ENCODE measurements at regions of chr20 and their contacts with region 1.

Region 1: DNA sequence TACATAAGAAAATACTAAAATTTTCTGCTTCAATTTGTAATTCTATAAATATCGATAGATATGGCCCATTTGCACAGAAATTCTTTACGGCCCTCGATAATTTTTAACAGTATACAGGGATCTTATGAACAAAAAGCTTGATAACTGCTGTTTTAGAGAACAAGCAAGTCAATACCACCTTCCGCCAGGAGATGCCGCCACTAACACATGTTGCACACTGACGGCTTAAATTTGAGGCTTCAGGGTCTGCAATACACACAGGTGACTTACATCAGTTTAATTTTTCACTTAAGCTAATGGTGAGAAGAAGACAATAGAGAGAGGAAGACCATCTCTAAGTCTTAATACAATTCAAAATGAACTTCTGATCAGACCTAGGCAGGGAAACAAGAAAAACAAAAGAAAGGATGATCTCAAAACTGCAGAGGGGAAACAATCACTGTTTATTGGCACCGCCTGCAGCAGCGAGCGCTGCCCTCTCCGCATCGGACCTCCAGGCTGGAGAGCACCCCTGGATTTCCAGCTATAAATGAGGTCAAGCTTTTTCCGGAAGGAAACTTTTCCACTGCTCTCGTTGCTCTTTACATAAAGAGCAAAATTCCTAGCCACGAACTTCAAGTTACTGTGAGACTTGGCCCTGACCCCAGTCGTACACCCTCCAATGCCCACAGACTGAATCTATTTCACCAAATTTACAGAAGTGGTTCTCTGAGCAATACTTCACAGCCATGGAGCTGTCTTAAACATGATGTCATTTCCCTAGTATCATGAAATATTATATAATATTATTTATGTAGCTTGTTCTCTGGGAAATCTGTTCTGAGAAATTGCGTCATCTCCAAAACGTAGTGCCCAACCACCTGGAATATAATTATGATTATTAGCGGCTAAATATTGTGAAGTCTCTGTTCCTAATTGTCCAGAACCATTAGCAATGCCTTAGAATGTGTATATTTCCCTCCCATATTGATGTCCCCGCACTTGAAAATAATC is 54.1 kb downstream of the OTOR start:
- DNase-seq: peak; percentile 15
- H3K4me3 Mint-ChIP-seq: no peak overlapping the region
- H3K27ac Mint-ChIP-seq: no peak overlapping the region
- H3K4me1 Mint-ChIP-seq: no peaks in the 10 kb centered on the region
- H3K27me3 Mint-ChIP-seq: peaks cover 6% of the 10 kb centered on the region

Region 2: DNA sequence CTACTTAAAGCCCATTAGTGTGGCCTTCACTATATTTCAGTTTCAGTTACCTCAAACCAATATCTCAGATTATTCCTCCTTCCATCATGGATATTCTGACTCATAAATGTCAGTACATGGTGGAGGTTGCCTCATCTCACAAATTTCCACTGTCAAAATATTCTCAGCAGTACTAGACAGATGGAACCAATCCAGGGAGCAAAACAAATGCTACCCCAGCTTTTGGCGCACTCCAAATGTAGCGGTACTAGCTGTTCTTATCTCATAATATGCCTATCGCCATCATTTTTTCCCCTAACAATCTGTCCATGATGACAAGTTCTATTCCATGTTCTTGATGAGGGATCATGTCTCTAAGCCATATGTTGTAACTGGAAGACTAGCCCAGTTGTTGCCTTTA is 1255.1 kb before region 1 on chr20:
- intact Hi-C with region 1: no loop called
- DNase-seq: no peak
- H3K4me3 Mint-ChIP-seq: no peak overlapping the region
- H3K27ac Mint-ChIP-seq: no peak overlapping the region
- H3K4me1 Mint-ChIP-seq: no peaks in the 10 kb centered on the region
- H3K27me3 Mint-ChIP-seq: no peaks in the 10 kb centered on the region

Region 3: DNA sequence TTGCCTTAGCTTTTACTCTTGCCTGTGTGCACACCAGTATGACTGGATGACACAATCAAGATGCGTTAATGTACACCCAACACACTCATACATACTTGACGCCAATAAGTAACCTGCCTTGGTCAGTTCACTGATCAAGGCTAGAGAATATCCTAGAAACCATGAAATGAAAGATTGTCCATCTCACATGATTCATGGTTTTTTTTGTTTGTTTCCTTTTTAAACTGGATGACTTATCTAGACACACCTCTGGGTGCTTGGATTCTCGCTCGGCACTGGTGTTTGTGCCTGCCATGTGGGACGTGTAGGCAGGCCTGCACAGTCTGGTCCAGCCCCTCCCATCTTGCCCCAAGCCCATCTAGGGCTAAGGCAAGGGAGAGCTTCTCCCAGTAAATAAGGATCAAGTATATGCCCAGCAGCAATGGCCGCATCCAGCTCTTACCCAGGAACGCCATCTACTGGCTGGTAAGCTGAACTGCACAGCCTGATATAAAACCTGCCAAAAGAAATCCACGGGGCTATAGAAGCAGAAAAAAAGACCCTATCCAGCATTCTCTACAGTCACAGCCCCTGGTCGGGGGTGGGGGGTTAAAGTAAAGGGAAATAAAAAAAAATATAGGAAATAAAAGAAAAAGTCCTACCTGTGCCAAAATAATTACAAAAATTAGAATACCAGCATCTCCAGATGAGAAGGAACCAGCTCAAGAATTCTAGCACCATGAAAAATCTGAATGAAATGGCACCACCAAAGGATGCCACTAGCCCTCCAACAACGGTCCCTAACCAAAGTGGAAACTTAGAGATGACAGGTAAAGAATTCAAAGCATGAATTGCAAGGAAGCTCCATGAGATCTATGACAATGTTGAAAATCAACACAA is 19.2 kb after region 1 on chr20:
- intact Hi-C with region 1: loop called (anchors 1 kb)
- DNase-seq: no peak
- H3K4me3 Mint-ChIP-seq: no peak overlapping the region
- H3K27ac Mint-ChIP-seq: no peak overlapping the region
- H3K4me1 Mint-ChIP-seq: no peaks in the 10 kb centered on the region
- H3K27me3 Mint-ChIP-seq: peaks cover 4% of the 10 kb centered on the region

Region 4: GRCh38 chr20:16984481-16984880 is 182.3 kb after region 1 on chr20:
- intact Hi-C with region 1: no loop called
- DNase-seq: no peak
- H3K4me3 Mint-ChIP-seq: no peak overlapping the region
- H3K27ac Mint-ChIP-seq: no peak overlapping the region
- H3K4me1 Mint-ChIP-seq: no peaks in the 10 kb centered on the region
- H3K27me3 Mint-ChIP-seq: no peaks in the 10 kb centered on the region

Region 5: GRCh38 chr20:17431621-17432364 is 629.6 kb after region 1 on chr20:
- intact Hi-C with region 1: loop called (anchors 1 kb)
- DNase-seq: peak; percentile 24
- H3K4me3 Mint-ChIP-seq: no peak overlapping the region
- H3K27ac Mint-ChIP-seq: no peak overlapping the region
- H3K4me1 Mint-ChIP-seq: no peaks in the 10 kb centered on the region
- H3K27me3 Mint-ChIP-seq: peaks cover 12% of the 10 kb centered on the region

Region 6: GRCh38 chr20:18276821-18277220 is 1474.6 kb after region 1 on chr20:
- intact Hi-C with region 1: loop called (anchors 5 kb)
- DNase-seq: peak; percentile 61
- H3K4me3 Mint-ChIP-seq: no peak overlapping the region
- H3K27ac Mint-ChIP-seq: no peak overlapping the region
- H3K4me1 Mint-ChIP-seq: peaks cover 10% of the 10 kb centered on the region
- H3K27me3 Mint-ChIP-seq: peaks cover 19% of the 10 kb centered on the region